GM12878 (cell line): ENCODE measurements at regions of chr18 and their contacts with region 1.

Region 1: DNA sequence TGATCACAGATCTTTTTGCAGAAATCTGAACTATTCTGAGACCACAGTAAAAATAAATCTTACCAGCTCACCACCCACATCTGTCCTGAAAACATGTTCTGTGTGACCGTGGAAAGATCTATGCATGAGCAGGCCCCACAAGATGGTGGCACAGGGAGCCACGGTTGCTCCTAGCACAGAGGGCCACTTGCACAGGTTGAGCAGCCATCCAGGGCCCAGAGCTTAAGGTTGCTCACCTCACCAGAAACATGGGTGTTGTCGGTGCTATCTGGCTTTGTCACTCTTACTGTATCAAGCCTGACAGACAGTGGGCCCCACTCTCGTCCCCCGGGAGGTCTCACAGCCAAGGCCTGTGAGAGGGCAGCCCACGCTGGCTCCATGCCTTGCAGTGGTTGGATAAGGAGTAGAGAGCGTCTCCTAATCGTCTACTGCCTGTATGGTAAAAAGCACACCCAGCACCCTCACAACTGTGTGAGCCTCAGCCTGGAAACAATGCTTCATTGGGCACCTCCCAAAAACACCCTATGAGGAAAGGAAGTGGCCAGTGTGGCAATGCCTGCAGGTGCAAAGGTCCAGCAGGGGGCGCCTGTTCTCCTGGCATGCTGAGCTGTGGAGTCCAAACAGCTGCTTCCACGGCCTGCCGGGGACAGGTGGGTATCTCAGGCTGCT is 19.6 kb downstream of the TUBB6 start:
- DNase-seq: no peak
- ATAC-seq: peak; percentile 98
- H3K4me3 ChIP-seq: no peak overlapping the region
- H3K27ac ChIP-seq: no peak overlapping the region
- H3K4me1 ChIP-seq: no peaks in the 10 kb centered on the region
- H3K27me3 ChIP-seq: no peaks in the 10 kb centered on the region
- CTCF ChIP-seq: peak; percentile 70 to 94 (median 91)
- EP300 ChIP-seq: no peak
- POLR2A ChIP-seq: no peak; the same call in 1 of the 2 replicates
- RAD21 ChIP-seq: no peak; the same call in 1 of the 2 replicates

Region 2: DNA sequence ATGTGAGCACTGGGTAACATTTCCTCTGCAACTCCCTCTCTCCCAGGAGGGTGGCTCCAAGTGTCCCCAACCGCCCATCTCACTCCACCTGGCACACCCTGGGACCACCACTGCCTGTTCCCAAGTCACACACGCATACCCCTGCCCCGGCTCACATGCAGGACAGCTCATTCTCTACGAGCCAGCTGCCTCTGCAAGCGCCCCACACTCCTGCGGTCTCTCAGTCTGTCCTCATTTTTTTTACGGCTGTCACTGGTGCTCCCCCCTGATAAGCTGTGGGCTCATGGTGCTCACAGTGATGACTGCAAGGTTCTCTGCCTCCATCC is 18.6 kb after region 1 on chr18:
- CTCF ChIA-PET with region 1: interaction called, 20 read pairs
- POLR2A ChIA-PET with region 1: no interaction called
- RAD21 ChIA-PET with region 1: no interaction called
- SMC1A ChIA-PET with region 1: no interaction called
- in situ Hi-C with region 1: no loop called
- intact Hi-C with region 1: no loop called
- DNase-seq: no peak
- ATAC-seq: no peak
- H3K4me3 ChIP-seq: no peak overlapping the region
- H3K27ac ChIP-seq: no peak overlapping the region
- H3K4me1 ChIP-seq: no peaks in the 10 kb centered on the region
- H3K27me3 ChIP-seq: no peaks in the 10 kb centered on the region
- CTCF ChIP-seq: no peak
- EP300 ChIP-seq: no peak
- POLR2A ChIP-seq: peak; percentile 53; the same call in 1 of the 2 replicates
- RAD21 ChIP-seq: no peak

Region 3: DNA sequence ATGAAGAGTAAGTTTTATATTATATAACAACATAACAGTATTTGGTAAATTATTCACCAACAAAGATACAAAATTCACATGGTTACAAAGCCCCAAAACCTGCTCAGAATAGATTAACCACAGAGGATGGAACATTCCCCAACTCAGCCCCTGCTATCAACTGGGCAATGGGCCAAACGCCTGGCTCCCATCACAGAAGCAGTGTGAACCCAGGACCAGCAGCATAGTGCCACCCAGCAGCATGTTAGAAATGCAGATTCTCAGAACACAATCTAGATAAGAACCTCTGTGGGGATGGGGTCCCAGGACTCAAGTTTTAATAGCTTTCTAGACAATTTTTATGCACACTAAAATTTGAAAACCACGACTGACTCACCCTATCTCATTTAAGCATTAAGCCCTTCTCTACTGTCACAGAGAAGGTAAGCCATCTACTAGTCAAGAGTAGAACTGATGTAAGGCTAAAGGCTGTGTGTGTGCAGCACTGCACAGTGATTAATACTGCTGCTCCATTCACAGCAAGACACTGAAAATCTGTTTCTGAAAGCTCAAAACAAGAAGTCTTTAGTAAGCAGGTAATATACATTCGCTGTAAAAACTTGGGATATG is 34.2 kb after region 1 on chr18:
- CTCF ChIA-PET with region 1: interaction called, 12 read pairs
- POLR2A ChIA-PET with region 1: no interaction called
- RAD21 ChIA-PET with region 1: no interaction called
- SMC1A ChIA-PET with region 1: interaction called, 4 read pairs
- in situ Hi-C with region 1: no loop called
- intact Hi-C with region 1: no loop called
- DNase-seq: no peak
- ATAC-seq: peak; percentile 33; the same call in 2 of the 3 replicates
- H3K4me3 ChIP-seq: no peak overlapping the region
- H3K27ac ChIP-seq: no peak overlapping the region
- H3K4me1 ChIP-seq: no peaks in the 10 kb centered on the region
- H3K27me3 ChIP-seq: no peaks in the 10 kb centered on the region
- CTCF ChIP-seq: no peak
- EP300 ChIP-seq: no peak
- POLR2A ChIP-seq: no peak
- RAD21 ChIP-seq: no peak